Naive thymus-derived CD8-positive, alpha-beta T cell (primary cell): ENCODE measurements at regions of chr3 and their contacts with region 1.

Region 1: GRCh38 chr3:129120254-129121004 is 1.2 kb downstream of the RAB43 start:
- DNase-seq: peak; percentile 73 to 96 (median 87)
- ATAC-seq: peak; percentile 51 to 60
- H3K4me3 Mint-ChIP-seq: peak overlapping the region; percentile 83 to 99 (median 94)
- H3K27ac Mint-ChIP-seq: peak overlapping the region; percentile 88 to 99 (median 98)
- H3K4me1 Mint-ChIP-seq: peaks cover 21 to 68% (median 37%) of the 10 kb centered on the region in 4 donors
- H3K27me3 Mint-ChIP-seq: no peaks in the 10 kb centered on the region

Region 2: DNA sequence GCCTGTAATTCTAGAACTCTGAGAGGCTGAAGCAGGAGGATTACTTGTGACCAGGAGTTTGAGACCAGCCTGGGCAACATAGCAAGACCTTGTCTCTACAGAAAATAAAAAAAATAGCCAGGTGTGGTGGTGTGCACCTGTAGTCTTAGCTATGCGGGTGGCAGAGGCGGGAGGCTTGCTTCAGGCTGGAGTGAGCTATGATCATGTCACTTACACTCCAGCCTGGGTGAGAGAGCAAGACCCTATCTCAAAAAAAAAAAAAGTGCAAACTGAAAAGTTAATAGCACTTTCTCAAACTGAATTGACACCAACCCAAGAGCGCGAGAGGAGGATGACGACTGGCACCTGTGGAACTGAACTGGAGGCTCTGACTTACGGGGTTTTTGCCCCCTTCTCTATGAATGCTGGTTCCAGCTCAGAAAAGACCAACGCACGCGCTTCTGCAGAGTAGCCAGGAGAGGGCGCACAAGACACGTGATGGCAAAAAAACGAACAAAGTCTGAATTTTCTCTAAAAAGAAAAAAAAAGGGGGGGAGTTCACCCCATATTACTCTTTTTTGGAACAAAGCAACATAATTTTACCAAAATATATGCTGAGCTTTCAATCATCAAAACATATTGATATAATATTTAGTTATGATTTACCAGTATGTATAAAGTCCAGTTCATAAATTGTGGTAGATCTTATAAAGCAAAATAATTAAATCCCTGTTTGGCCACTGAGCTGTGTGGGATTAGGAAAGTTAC is 150.3 kb before region 1 on chr3:
- POLR2A ChIA-PET with region 1: interaction called, 10 read pairs
- DNase-seq: peak; percentile 47 to 79 (median 66)
- ATAC-seq: peak; percentile 74 to 80
- H3K4me3 Mint-ChIP-seq: no peak overlapping the region
- H3K27ac Mint-ChIP-seq: peak overlapping the region in 3 of 10 donors; percentile 7 to 61 (median 32)
- H3K4me1 Mint-ChIP-seq: peaks cover 0 to 20% (median 6%) of the 10 kb centered on the region in 4 donors
- H3K27me3 Mint-ChIP-seq: no peaks in the 10 kb centered on the region

Region 3: GRCh38 chr3:129016356-129016719 is 104.1 kb before region 1 on chr3:
- POLR2A ChIA-PET with region 1: interaction called, 81 read pairs
- DNase-seq: peak; percentile 55 to 88 (median 68)
- ATAC-seq: peak; percentile 91 to 92
- H3K4me3 Mint-ChIP-seq: peak overlapping the region; percentile 43 to 94 (median 80)
- H3K27ac Mint-ChIP-seq: peak overlapping the region; percentile 77 to 100 (median 96)
- H3K4me1 Mint-ChIP-seq: peaks cover 26 to 55% (median 49%) of the 10 kb centered on the region in 4 donors
- H3K27me3 Mint-ChIP-seq: no peaks in the 10 kb centered on the region

Region 4: GRCh38 chr3:129068291-129068886 is 52.0 kb before region 1 on chr3:
- POLR2A ChIA-PET with region 1: interaction called, 26 read pairs
- DNase-seq: peak in 1 of 10 donors; percentile 30
- ATAC-seq: peak; percentile 51 to 84
- H3K4me3 Mint-ChIP-seq: peak overlapping the region; percentile 68 to 89 (median 76)
- H3K27ac Mint-ChIP-seq: peak overlapping the region in 6 of 10 donors; percentile 24 to 90 (median 66)
- H3K4me1 Mint-ChIP-seq: peaks cover 18 to 28% (median 23%) of the 10 kb centered on the region in 4 donors
- H3K27me3 Mint-ChIP-seq: peaks cover 0 to 6% (median 0%) of the 10 kb centered on the region in 5 donors

Region 5: DNA sequence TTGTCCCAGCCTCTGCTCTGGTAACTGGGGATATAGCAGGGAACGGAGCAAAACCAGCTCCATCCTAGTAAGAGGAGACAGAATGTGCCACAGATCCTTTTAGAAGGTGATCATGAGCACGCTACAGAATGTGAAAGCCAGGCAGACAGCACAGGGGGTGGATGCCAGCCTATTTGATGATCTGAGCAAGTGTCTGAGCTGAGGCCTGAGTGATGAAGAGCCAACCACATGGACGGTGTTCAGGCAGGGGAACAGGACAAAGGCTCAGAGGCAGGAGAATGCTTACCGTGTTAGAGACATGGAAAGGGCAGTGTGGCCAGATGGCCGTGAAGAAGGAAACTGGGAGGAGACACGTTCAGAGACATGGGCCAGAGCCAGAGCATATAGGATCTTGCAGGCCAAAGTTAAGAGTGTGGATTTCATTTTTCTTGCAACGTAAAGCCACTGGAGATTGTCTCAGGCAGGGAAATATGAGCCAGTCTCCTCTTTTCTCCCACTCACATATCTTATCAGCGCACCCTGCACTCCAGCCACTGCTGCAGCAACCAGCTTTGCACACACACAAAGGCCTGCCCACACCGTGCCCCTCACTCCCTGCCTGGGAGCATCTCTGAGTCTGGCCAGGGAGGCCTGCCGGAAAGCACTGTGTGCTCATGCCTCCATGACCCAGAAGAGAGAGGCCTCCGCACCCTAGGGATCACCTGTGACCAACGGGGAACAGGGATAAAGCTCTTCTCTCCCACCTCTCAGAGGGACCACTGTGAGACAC is 18.9 kb before region 1 on chr3:
- POLR2A ChIA-PET with region 1: interaction called, 140 read pairs
- DNase-seq: no peak
- ATAC-seq: peak in 1 of 2 donors; percentile 16
- H3K4me3 Mint-ChIP-seq: peak overlapping the region in 9 of 10 donors; percentile 16 to 72 (median 58)
- H3K27ac Mint-ChIP-seq: peak overlapping the region; percentile 71 to 91 (median 89)
- H3K4me1 Mint-ChIP-seq: peaks cover 53 to 92% (median 85%) of the 10 kb centered on the region in 4 donors
- H3K27me3 Mint-ChIP-seq: no peaks in the 10 kb centered on the region

Region 6: GRCh38 chr3:129278439-129278970 is 158.1 kb after region 1 on chr3 and contains the start of gene HMCES:
- POLR2A ChIA-PET with region 1: interaction called, 20 read pairs
- DNase-seq: peak; percentile 92 to 97 (median 94)
- ATAC-seq: peak; percentile 88 to 89
- H3K4me3 Mint-ChIP-seq: peak within 1 kb of the TSS; percentile 89 to 99 (median 98)
- H3K27ac Mint-ChIP-seq: peak within 1 kb of the TSS; percentile 87 to 100 (median 99)
- H3K4me1 Mint-ChIP-seq: peaks cover 22 to 68% (median 43%) of the 10 kb centered on the region in 4 donors
- H3K27me3 Mint-ChIP-seq: no peaks in the 10 kb centered on the region
- polyA plus RNA-seq, gene HMCES: 82.2 to 112 (median 83.9) TPM